H1 (cell line): ENCODE measurements at regions of chr14 and their contacts with region 1.

Region 1: DNA sequence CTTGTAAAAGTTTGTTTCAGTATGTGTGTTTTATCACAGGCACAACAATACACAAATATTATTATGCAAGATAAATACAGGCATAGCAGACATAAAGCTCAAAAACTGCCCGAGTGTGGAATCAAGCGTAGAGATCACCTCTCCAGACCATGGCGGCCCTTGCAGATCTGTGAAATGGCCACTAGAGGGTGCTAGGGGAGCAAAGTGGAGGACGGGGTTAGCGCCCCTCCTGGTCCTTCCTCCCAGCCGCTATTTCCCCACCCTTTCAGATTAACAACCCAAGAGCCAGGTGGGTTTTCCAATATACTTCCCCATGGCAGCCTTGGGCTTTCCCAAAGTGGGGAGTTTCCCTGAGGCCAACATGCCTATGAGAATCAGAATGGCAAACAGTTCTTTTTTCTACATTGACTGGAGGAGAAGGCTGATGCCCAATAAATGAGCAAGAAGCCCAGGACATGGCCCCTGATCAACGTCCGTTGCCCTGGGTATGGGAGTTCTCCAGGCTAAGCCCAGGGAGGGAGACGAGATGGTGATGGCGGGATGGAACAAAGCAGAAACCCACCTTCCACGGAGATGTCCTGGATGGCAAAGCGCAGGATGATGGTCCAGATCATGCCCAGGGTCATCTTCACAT is 67.4 kb downstream of the ACTN1 start:
- DNase-seq: peak; percentile 59 to 91
- H3K4me3 ChIP-seq: no peak overlapping the region
- H3K27ac ChIP-seq: no peak overlapping the region
- H3K4me1 ChIP-seq: no peaks in the 10 kb centered on the region; a peak in 1 of 7 replicates
- H3K27me3 ChIP-seq: no peaks in the 10 kb centered on the region
- CTCF ChIP-seq: peak; percentile 97 to 100 (median 99)
- EP300 ChIP-seq: no peak
- POLR2A ChIP-seq: no peak
- RAD21 ChIP-seq: peak; percentile 96 to 98

Region 2: DNA sequence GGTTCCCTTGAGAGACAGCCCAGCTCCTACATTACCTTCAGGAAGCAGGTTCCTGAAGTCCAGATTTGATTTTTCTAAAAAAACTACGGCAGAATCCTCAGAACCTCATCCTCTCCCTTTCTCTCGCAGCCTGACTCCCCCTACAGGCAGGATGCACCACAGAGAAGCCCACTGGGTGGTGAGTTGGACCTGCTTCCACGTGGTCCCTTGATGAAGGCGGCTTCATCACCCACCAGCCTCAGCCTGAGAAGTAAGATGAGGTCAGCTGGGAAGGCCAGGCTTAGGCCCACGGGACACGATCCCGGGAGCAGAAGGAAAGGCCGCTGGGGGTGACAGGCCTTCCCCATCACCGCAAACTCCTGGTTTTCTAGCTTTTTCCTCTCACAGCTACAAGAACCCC is 15.6 kb before region 1 on chr14:
- CTCF ChIA-PET with region 1: interaction called, 22 read pairs
- POLR2A ChIA-PET with region 1: interaction called, 3 read pairs
- DNase-seq: no peak
- H3K4me3 ChIP-seq: no peak overlapping the region
- H3K27ac ChIP-seq: no peak overlapping the region
- H3K4me1 ChIP-seq: no peaks in the 10 kb centered on the region
- H3K27me3 ChIP-seq: no peaks in the 10 kb centered on the region
- CTCF ChIP-seq: peak in 2 of 3 experiments; percentile 54 to 65; a peak in 2 of 4 replicates
- EP300 ChIP-seq: no peak
- POLR2A ChIP-seq: no peak
- RAD21 ChIP-seq: no peak

Region 3: DNA sequence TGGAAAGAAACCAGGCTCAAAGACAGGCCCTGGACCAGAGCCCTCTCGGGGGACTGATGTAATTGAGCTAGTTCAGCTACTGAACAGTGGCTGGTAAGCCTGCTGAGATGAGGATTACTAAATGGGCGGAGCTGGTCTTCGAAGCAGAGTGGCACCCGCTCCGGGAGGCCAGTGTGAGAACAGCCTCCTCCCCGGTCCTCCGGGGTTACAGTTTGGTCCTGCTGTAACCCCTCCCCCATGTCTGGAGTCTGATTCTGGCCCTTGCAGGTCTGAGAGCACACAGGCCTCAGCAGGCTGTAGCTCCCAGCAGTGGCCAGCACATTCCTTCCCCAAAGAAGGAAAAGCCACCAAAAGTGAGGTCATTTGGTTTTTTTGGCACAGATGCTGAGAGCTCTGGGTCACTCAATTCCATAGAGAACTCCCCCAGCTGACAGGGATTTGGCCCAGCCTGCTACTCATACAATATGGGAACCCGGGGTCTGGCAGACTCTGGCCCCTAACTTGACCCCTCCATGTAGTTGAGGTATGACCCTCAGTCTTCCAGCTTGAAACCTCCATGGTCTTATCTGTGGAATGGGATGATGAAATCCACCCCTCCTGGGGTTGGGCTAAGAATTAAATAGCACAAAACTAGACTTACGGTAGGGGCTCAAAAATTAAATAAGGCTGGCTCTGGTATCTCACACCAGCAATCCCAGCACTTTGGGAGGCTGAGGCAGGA is 28.3 kb after region 1 on chr14:
- CTCF ChIA-PET with region 1: interaction called, 110 read pairs
- POLR2A ChIA-PET with region 1: interaction called, 5 read pairs
- DNase-seq: no peak
- H3K4me3 ChIP-seq: no peak overlapping the region
- H3K27ac ChIP-seq: no peak overlapping the region
- H3K4me1 ChIP-seq: peaks cover 2 to 40% (median 24%) of the 10 kb centered on the region in 4 experiments
- H3K27me3 ChIP-seq: no peaks in the 10 kb centered on the region
- CTCF ChIP-seq: no peak
- EP300 ChIP-seq: no peak
- POLR2A ChIP-seq: no peak
- RAD21 ChIP-seq: no peak

Region 4: GRCh38 chr14:68961781-68962584 is 50.3 kb after region 1 on chr14:
- CTCF ChIA-PET with region 1: interaction called, 14 read pairs
- POLR2A ChIA-PET with region 1: no interaction called
- DNase-seq: peak in 1 of 2 experiments; percentile 77
- H3K4me3 ChIP-seq: no peak overlapping the region
- H3K27ac ChIP-seq: peak overlapping the region; percentile 43; the same call in 1 of the 2 replicates
- H3K4me1 ChIP-seq: peaks cover 0 to 20% (median 11%) of the 10 kb centered on the region in 4 experiments; a peak in 4 of 7 replicates
- H3K27me3 ChIP-seq: no peaks in the 10 kb centered on the region; a peak in 1 of 7 replicates
- CTCF ChIP-seq: no peak
- EP300 ChIP-seq: no peak
- POLR2A ChIP-seq: no peak
- RAD21 ChIP-seq: no peak

Region 5: DNA sequence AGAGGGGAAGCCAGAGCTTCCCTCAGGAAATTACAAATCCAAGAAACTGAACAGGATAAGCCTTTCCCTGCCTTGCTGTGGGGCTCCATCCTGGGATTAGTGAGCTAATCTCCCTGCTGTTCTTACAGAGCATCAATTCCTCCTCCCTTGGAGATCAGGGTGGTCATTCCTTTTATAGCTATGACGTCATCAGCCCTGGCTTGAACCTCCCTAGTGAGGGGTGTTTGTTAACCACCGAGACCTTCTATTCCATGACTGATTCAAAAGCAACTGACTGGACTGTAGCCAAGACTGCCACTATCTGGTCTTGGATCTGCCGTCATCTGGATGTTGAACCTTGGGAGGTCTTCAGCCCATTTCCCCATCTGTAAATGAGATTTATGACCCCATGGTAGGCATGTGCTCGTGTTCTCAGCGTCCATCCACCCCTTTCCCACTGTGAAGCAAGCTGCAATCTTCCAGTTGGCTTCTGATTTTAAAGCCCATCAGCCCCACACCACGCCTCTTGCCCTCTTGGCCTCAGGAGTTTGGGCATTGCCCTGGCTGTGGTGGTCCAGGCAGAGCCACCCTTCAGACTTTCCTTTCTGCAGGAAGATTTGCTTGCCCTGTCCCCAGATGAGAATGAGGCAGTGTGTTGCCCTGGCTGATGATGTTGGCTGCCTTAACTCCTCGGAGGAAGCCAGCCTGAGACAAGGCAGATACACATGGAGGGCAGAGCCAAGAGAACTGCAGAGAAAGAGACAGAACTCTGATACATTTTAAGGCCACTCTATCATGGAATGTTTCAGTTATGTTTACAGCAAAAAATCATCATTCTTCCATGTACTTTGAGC is 127.0 kb after region 1 on chr14:
- CTCF ChIA-PET with region 1: interaction called, 14 read pairs
- POLR2A ChIA-PET with region 1: interaction called, 3 read pairs
- DNase-seq: no peak
- H3K4me3 ChIP-seq: no peak overlapping the region
- H3K27ac ChIP-seq: no peak overlapping the region
- H3K4me1 ChIP-seq: peaks cover 3 to 20% (median 12%) of the 10 kb centered on the region in 4 experiments
- H3K27me3 ChIP-seq: no peaks in the 10 kb centered on the region
- CTCF ChIP-seq: no peak
- EP300 ChIP-seq: no peak
- POLR2A ChIP-seq: no peak
- RAD21 ChIP-seq: no peak

Region 6: GRCh38 chr14:69090187-69090789 is 178.6 kb after region 1 on chr14:
- CTCF ChIA-PET with region 1: interaction called, 15 read pairs
- POLR2A ChIA-PET with region 1: no interaction called
- DNase-seq: no peak
- H3K4me3 ChIP-seq: no peak overlapping the region
- H3K27ac ChIP-seq: no peak overlapping the region
- H3K4me1 ChIP-seq: peaks cover 3 to 11% (median 5%) of the 10 kb centered on the region in 4 experiments; a peak in 5 of 7 replicates
- H3K27me3 ChIP-seq: no peaks in the 10 kb centered on the region
- CTCF ChIP-seq: peak; percentile 23 to 73 (median 71)
- EP300 ChIP-seq: no peak
- POLR2A ChIP-seq: no peak
- RAD21 ChIP-seq: peak; percentile 74 to 78

Region 7: DNA sequence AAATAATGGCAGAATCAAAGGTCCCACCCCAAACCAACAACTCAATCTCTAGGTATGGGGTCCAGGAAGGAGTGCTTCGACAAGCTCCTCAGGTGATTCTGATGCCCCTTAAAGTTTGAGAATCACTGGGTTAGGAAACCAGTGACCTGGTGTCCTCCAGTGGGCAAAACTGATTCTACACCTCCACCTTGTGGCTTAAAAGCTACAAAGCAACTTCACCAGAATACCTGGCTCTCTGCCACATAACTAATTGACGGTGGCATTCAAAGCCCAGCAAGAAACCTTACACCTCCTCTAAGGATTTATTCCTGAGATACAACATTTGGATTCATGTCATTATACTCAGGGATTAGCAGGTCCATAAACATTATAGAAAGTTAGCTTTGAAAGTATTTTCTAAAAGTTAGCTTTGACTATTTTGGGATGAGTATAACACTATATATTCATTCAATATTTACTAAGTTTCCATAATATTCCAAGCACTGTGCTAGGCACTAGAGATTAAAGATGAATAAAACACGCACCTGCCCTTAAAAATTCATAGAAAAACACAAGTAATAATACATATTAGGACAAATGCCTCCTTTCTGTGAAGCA is 195.8 kb after region 1 on chr14:
- CTCF ChIA-PET with region 1: interaction called, 71 read pairs
- POLR2A ChIA-PET with region 1: interaction called, 3 read pairs
- DNase-seq: no peak
- H3K4me3 ChIP-seq: no peak overlapping the region
- H3K27ac ChIP-seq: no peak overlapping the region
- H3K4me1 ChIP-seq: no peaks in the 10 kb centered on the region
- H3K27me3 ChIP-seq: no peaks in the 10 kb centered on the region
- CTCF ChIP-seq: peak in 2 of 3 experiments; percentile 83 to 91; a peak in 3 of 4 replicates
- EP300 ChIP-seq: no peak
- POLR2A ChIP-seq: no peak
- RAD21 ChIP-seq: peak; percentile 96